ENCODE measurements at regions of chr17 and their contacts with region 1.

Region 1: DNA sequence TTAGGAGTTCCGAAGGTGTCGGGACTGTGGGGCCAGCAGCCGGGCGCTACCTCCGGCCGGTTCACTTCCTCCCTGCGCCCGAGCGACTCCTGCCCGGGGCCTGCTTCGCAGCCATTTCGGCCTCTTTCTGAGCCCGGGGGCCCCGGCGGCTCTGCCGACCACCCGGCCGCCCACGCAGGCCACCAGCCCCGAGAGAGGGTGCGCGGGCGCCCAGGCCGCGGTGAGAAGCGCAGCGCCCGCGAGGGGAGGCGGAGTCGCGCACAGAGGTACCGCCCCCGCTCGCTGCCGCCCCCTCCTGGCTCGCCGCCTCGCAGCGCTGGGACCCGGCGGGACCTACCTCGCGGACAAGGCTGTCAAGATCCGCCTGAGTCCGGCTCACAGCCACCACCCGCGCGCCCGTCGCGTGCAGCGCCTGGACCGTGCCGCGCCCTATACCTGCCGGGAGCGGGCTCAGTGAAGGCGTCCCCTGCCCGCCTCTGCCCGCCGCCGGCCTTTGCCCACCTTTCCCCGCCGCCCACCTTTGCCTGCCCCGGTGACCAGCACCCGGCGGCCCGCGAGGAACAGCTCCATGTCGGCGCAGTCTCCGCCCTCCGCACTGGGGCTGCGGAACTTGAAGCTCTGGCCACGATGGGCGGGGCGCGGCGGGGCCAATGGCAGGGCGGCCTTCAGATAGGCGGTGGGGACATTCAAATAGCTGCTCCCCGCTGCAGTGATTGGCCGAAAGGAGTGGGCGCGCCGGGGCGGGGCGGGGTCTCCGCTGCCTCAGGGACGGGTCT is at the start of gene DCXR:
- DNase-seq: peak; percentile 98 to 99 (median 99)
- ATAC-seq: peak; percentile 78 to 88 (median 81)
- H3K4me3 ChIP-seq: peak within 1 kb of the TSS; percentile 68 to 97 (median 81)
- H3K27ac ChIP-seq: peak within 1 kb of the TSS; percentile 84 to 89 (median 89)
- H3K4me1 ChIP-seq: peaks cover 0 to 47% (median 16%) of the 10 kb centered on the region in 4 donors
- H3K27me3 ChIP-seq: no peaks in the 10 kb centered on the region
- CTCF ChIP-seq: peak; percentile 66 to 92 (median 79)
- POLR2A ChIP-seq: peak; percentile 99
- total RNA-seq, gene DCXR: 389 to 1,607 (median 735) TPM

Region 2: DNA sequence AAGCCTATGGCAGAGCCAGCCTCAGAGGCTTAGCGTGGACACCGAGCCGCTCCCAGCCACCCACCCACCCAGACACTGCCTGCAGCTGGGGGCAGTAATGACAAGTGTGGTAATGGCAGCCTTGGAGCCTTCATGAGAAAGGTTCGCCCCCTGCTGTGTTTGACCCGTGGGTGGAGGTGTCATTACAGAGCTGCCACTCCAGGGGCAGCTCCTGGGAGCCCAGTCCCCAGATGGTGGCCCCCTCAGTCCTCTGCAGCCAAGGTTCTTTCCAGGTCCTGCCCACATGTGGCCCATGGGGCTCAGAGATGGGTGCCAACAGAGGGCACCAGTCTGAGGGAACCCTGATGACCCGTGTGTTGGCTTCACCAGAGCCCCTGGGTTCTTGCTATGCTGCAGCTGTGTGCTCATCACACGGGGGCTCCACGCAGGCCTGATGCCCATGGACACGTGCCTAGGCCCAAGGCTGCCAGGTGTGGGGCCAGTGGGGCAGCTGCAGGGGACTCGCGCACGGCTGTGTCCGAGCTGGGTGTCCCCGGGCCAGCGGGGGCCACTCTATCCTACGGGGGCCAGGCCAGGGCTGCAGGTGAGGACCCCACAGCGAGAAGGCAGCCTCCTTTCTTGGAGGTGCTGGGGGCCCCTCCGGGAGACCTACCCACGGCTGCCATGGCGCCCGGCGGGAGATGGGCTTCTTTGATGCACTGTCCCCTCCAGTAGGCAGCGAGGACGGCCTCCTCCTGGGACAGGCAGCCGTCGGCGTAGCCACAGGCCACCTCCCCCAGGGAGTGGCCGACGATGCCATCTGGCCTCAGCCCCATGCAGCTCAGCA is 52.6 kb after region 1 on chr17:
- intact Hi-C with region 1: loop called (anchors 10 kb)
- DNase-seq: peak in 1 of 3 donors; percentile 56
- ATAC-seq: no peak
- H3K4me3 ChIP-seq: no peak overlapping the region
- H3K27ac ChIP-seq: no peak overlapping the region
- H3K4me1 ChIP-seq: peaks cover 0 to 12% (median 4%) of the 10 kb centered on the region in 4 donors
- H3K27me3 ChIP-seq: no peaks in the 10 kb centered on the region
- CTCF ChIP-seq: no peak
- POLR2A ChIP-seq: no peak

Region 3: DNA sequence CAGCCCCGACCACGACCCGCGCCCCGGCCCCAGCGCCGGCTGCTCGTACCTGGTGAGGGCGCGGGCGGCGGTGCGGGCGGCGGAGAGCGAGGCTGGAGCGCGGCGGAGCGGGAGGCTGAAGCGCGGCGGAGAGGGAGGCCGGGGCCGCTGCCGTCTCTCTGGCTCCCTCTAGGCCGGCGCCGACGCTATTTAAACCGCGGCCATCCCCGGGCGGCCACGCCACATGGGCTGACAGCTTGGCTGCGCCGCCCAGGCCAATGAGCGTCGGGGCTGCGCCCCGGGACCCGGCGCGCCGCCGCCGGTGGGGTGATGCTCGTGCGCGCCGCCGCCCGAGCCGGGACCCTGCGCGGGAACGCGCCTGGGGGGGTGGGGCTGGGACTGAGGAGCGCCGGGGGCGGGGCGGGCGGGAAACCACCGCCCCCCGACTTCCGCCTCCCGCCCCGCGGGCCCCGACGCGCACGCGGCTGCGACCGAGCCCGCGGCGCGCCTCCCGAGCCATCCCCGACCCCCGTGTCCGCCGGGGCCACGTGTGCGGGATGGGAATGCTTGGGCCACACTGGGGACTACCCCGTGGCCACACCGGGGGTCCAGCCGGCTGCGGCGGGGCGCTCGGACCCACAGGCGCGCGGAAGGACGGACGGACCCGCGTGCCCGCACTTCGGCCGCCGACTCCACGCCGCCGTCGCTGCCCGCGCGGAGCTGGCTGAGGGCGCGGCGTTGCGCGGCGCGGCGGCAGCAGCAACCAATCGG is 60.9 kb after region 1 on chr17 and contains the start of gene FASN:
- intact Hi-C with region 1: loop called in 1 of 2 experiments (anchors 10 kb)
- DNase-seq: peak; percentile 96 to 97 (median 96)
- ATAC-seq: peak; percentile 37 to 49 (median 47)
- H3K4me3 ChIP-seq: peak within 1 kb of the TSS; percentile 82 to 98 (median 84)
- H3K27ac ChIP-seq: peak within 1 kb of the TSS; percentile 93 to 99 (median 94)
- H3K4me1 ChIP-seq: peaks cover 0 to 68% (median 28%) of the 10 kb centered on the region in 4 donors
- H3K27me3 ChIP-seq: no peaks in the 10 kb centered on the region
- CTCF ChIP-seq: peak in 3 of 4 donors; percentile 26 to 45 (median 29)
- POLR2A ChIP-seq: peak; percentile 99
- total RNA-seq, gene FASN: 76.5 to 290 (median 217) TPM

Region 4: DNA sequence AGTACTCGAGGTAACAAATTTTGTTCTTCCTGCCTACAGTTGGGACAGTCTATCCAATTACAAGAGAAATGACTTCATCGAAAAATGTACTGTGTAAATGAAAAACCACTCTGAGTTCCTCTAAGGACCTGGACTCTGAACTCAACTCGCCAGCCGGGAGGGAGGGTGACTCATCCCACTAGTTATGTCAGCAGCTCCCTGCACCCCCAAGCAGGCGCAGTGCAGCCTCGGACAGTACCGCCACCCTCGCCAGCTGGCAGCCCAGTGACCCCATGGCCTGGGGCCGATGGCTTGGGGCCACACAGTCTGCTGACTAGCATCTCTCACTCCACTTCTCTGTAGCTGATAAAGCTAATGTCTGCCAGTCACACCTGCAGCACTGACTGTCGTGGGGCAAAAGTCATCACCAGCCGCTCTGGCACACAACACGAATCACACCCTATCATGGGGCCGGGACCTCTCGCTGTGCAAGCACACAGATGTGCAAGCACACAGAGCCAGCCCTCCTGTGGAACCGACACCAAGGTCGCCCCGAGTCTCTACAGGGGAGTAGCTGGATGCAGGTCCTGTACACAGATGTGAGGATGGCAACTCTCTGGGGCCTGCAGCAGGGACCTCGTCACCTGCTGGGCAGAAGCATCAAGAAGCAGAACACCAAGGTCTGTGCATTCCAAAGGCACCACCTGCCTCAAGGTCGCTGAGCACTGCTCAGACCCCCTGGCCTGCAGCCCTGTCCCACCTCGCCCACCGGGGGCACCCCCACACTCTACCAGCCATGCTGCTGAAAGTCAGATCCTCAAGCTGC is 230.5 kb after region 1 on chr17:
- intact Hi-C with region 1: no loop called
- DNase-seq: peak; percentile 95 to 98 (median 97)
- ATAC-seq: peak; percentile 87 to 94 (median 92)
- H3K4me3 ChIP-seq: peak overlapping the region in 1 of 3 donors; percentile 26
- H3K27ac ChIP-seq: peak overlapping the region; percentile 75 to 93 (median 86)
- H3K4me1 ChIP-seq: peaks cover 0 to 55% (median 28%) of the 10 kb centered on the region in 4 donors
- H3K27me3 ChIP-seq: no peaks in the 10 kb centered on the region
- CTCF ChIP-seq: no peak
- POLR2A ChIP-seq: no peak

Measured in right lobe of liver (tissue), 6 donors.